ENCODE measurements at regions of chr14 and their contacts with region 1.

Region 1: GRCh38 chr14:51780006-51780692 is 80.3 kb upstream of the GNG2 start:
- DNase-seq: peak in 1 of 2 experiments; percentile 86
- H3K4me3 ChIP-seq: peak overlapping the region in 1 of 4 experiments; percentile 23; a peak in 2 of 8 replicates
- H3K27ac ChIP-seq: no peak overlapping the region
- H3K4me1 ChIP-seq: no peaks in the 10 kb centered on the region; a peak in 1 of 7 replicates
- H3K27me3 ChIP-seq: no peaks in the 10 kb centered on the region
- CTCF ChIP-seq: peak; percentile 56 to 69 (median 67)
- EP300 ChIP-seq: no peak
- POLR2A ChIP-seq: no peak
- RAD21 ChIP-seq: peak; percentile 86 to 87

Region 2: GRCh38 chr14:51298895-51299294 is 481.3 kb before region 1 on chr14:
- CTCF ChIA-PET with region 1: interaction called, 17 read pairs
- POLR2A ChIA-PET with region 1: no interaction called
- DNase-seq: no peak
- H3K4me3 ChIP-seq: no peak overlapping the region
- H3K27ac ChIP-seq: no peak overlapping the region
- H3K4me1 ChIP-seq: peaks cover 0 to 4% (median 0%) of the 10 kb centered on the region in 4 experiments; a peak in 2 of 7 replicates
- H3K27me3 ChIP-seq: no peaks in the 10 kb centered on the region
- CTCF ChIP-seq: no peak
- EP300 ChIP-seq: no peak
- POLR2A ChIP-seq: no peak
- RAD21 ChIP-seq: no peak

Region 3: DNA sequence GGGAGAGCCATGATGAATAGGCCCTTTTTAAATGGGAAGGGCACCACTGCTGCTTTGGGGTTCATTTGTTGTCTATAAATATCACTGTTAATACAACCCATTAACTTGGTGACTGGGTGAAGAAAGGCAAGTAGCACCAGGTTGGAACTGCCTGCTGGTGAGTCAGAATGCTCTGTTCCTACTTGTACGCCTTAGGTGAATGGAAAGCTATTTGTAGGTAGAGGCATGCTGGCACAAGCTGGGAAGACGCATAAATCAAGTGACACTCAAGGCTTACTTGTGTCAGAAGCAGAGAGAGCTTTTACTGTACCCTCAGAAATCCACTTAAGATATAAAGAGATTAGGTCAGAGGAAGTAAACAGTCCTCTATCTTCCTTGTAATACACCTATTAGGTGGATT is 397.6 kb before region 1 on chr14:
- CTCF ChIA-PET with region 1: interaction called, 19 read pairs
- POLR2A ChIA-PET with region 1: no interaction called
- DNase-seq: no peak
- H3K4me3 ChIP-seq: no peak overlapping the region
- H3K27ac ChIP-seq: no peak overlapping the region
- H3K4me1 ChIP-seq: no peaks in the 10 kb centered on the region
- H3K27me3 ChIP-seq: peaks cover 0 to 1% (median 0%) of the 10 kb centered on the region in 4 experiments; a peak in 2 of 7 replicates
- CTCF ChIP-seq: no peak
- EP300 ChIP-seq: no peak
- POLR2A ChIP-seq: no peak
- RAD21 ChIP-seq: no peak

Region 4: GRCh38 chr14:51732494-51733112 is 47.5 kb before region 1 on chr14:
- CTCF ChIA-PET with region 1: interaction called, 16 read pairs
- POLR2A ChIA-PET with region 1: no interaction called
- DNase-seq: no peak
- H3K4me3 ChIP-seq: no peak overlapping the region
- H3K27ac ChIP-seq: no peak overlapping the region
- H3K4me1 ChIP-seq: no peaks in the 10 kb centered on the region
- H3K27me3 ChIP-seq: peaks cover 0 to 1% (median 0%) of the 10 kb centered on the region in 4 experiments; a peak in 1 of 7 replicates
- CTCF ChIP-seq: no peak
- EP300 ChIP-seq: no peak
- POLR2A ChIP-seq: no peak
- RAD21 ChIP-seq: no peak

Region 5: GRCh38 chr14:51750542-51750941 is 29.6 kb before region 1 on chr14:
- CTCF ChIA-PET with region 1: interaction called, 11 read pairs
- POLR2A ChIA-PET with region 1: no interaction called
- DNase-seq: peak; percentile 43 to 64
- H3K4me3 ChIP-seq: no peak overlapping the region
- H3K27ac ChIP-seq: no peak overlapping the region
- H3K4me1 ChIP-seq: no peaks in the 10 kb centered on the region
- H3K27me3 ChIP-seq: no peaks in the 10 kb centered on the region
- CTCF ChIP-seq: peak; percentile 15 to 56 (median 56)
- EP300 ChIP-seq: no peak
- POLR2A ChIP-seq: no peak
- RAD21 ChIP-seq: peak; percentile 70 to 72

Region 6: GRCh38 chr14:51828017-51828797 is 48.1 kb after region 1 on chr14:
- CTCF ChIA-PET with region 1: interaction called, 11 read pairs
- POLR2A ChIA-PET with region 1: no interaction called
- DNase-seq: no peak
- H3K4me3 ChIP-seq: no peak overlapping the region
- H3K27ac ChIP-seq: no peak overlapping the region
- H3K4me1 ChIP-seq: peaks cover 0 to 7% (median 3%) of the 10 kb centered on the region in 4 experiments; a peak in 2 of 7 replicates
- H3K27me3 ChIP-seq: no peaks in the 10 kb centered on the region
- CTCF ChIP-seq: no peak
- EP300 ChIP-seq: no peak
- POLR2A ChIP-seq: no peak
- RAD21 ChIP-seq: peak in 1 of 2 experiments; percentile 7; a peak in 1 of 4 replicates

Region 7: GRCh38 chr14:51979088-51979709 is 199.1 kb after region 1 on chr14:
- CTCF ChIA-PET with region 1: interaction called, 53 read pairs
- POLR2A ChIA-PET with region 1: no interaction called
- DNase-seq: peak; percentile 56 to 94
- H3K4me3 ChIP-seq: no peak overlapping the region
- H3K27ac ChIP-seq: no peak overlapping the region
- H3K4me1 ChIP-seq: no peaks in the 10 kb centered on the region
- H3K27me3 ChIP-seq: no peaks in the 10 kb centered on the region
- CTCF ChIP-seq: peak; percentile 76 to 95 (median 77)
- EP300 ChIP-seq: no peak
- POLR2A ChIP-seq: no peak
- RAD21 ChIP-seq: peak; percentile 84 to 88

Measured in H1 (cell line).